ENCODE measurements at regions of chr5 and their contacts with region 1.

Region 1: GRCh38 chr5:7856855-7857254 is 5.9 kb upstream of the CFAP90 start:
- DNase-seq: no peak
- H3K4me3 Mint-ChIP-seq: no peak overlapping the region
- H3K27ac Mint-ChIP-seq: no peak overlapping the region
- H3K4me1 Mint-ChIP-seq: peaks cover 26% of the 10 kb centered on the region
- H3K27me3 Mint-ChIP-seq: no peaks in the 10 kb centered on the region

Region 2: DNA sequence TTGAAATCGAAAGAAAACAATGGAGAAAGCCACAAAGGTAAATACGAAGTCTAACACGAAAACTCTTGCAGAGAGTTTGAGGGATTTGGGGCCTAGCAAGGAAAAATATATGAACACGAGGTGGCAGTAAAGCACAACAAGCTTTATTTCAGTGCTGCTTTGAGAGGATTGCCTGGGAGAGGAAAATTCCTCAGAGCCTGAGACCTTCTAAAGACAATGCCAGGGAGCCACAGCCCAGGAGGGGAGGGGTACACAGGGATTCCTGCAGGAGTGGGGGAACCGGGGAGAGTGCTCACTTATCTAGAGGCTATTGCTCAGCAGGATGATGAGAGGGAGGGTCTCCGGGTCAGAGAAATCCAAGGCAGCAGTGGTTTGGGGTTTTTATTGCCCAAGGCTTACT is 595.8 kb before region 1 on chr5:
- intact Hi-C with region 1: loop called (anchors 2 kb)
- DNase-seq: no peak
- H3K4me3 Mint-ChIP-seq: no peak overlapping the region
- H3K27ac Mint-ChIP-seq: no peak overlapping the region
- H3K4me1 Mint-ChIP-seq: no peaks in the 10 kb centered on the region
- H3K27me3 Mint-ChIP-seq: no peaks in the 10 kb centered on the region

Region 3: DNA sequence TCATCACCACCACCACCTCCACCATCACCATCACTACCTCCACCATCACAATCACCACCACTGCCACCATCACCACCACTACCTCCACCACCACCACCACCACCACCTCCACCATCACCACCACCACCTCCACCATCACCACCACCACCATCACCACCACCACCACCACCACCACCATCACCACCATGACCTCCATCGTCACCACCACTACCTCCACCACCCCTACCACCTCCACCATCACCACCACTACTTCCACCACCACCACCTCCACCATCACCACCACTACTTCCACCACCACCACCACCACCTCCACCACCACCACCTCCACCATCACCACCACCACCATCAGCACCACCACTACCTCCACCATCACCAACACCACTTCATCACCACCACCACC is 484.5 kb before region 1 on chr5:
- intact Hi-C with region 1: no loop called
- DNase-seq: no peak
- H3K4me3 Mint-ChIP-seq: no peak overlapping the region
- H3K27ac Mint-ChIP-seq: no peak overlapping the region
- H3K4me1 Mint-ChIP-seq: no peaks in the 10 kb centered on the region
- H3K27me3 Mint-ChIP-seq: no peaks in the 10 kb centered on the region

Region 4: DNA sequence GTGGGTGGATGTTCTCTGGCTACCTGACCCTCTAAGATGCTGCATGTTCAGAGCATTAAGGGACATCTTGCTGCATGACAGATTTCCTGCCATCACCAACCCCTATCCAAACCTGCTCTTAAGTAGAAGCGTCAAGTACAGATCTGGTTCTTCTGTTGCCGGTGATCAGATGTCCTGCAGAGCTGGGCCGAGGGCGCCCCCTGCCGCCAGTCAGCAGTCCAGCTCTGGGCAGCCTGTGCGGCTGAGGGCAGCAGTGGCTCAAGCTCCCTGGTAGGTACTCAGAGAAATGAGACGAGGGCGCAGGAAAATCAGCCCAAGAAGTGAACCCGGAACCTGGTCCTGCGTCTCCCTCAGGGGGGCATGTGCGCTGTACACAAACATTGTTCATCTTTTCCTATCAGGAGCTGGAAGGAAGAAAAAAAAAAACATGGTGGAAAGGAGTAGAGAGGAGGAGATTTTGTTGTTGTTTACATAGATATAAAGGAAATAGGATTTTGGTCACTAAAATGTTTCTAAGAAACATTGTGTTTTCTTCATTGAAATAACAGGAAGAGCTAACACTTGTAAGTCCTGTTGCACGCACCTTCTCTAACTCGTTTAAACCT is 101.8 kb before region 1 on chr5:
- intact Hi-C with region 1: loop called (anchors 5 kb)
- DNase-seq: peak; percentile 7
- H3K4me3 Mint-ChIP-seq: no peak overlapping the region
- H3K27ac Mint-ChIP-seq: no peak overlapping the region
- H3K4me1 Mint-ChIP-seq: no peaks in the 10 kb centered on the region
- H3K27me3 Mint-ChIP-seq: peaks cover 4% of the 10 kb centered on the region

Region 5: DNA sequence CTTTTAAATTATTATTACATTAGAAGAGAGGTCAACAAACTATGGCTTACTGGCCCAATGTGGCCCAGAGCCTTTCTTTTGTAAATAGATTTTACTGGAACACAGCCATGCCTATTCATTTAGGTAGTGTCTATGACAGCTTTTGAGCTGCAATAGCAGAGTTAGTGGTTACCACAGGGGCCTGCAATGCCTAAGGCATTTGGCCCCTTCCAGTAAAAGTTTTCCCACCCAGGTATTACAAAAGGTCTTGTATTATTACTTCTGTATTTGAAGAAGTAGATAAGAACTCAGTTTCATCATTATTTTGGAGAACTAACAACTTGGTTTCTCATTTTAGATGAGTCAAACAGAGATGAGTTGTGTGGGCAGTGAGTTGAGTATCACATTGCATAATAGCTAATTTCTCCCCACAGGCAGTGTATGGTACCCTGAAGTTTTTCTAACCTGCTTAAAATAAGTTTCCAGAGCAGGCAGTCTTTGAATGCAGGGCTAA is 21.6 kb after region 1 on chr5:
- intact Hi-C with region 1: no loop called
- DNase-seq: no peak
- H3K4me3 Mint-ChIP-seq: peak overlapping the region; percentile 17
- H3K27ac Mint-ChIP-seq: peak overlapping the region; percentile 81
- H3K4me1 Mint-ChIP-seq: peaks cover 61% of the 10 kb centered on the region
- H3K27me3 Mint-ChIP-seq: no peaks in the 10 kb centered on the region

Measured in activated T-helper 1 cell treated with anti-CD3 and anti-CD28 coated beads, Interleukin-12 subunit alpha, Interleukin-12 subunit beta, Interleukin-2, Interleukin-4 antibody, amounts not matched to agents 30 ng/mL and 10 ng/mL and 1 ng/mL, durations not matched to agents 14 hours and 24 hours and 36 hours (primary cell).